ENCODE measurements at regions of chr19 and their contacts with region 1.

Region 1: GRCh38 chr19:10027158-10027693 is 13.9 kb downstream of the RDH8 start:
- DNase-seq: no peak
- H3K4me3 ChIP-seq: no peak overlapping the region
- H3K27me3 ChIP-seq: peaks cover 3% of the 10 kb centered on the region
- CTCF ChIP-seq: no peak

Region 2: DNA sequence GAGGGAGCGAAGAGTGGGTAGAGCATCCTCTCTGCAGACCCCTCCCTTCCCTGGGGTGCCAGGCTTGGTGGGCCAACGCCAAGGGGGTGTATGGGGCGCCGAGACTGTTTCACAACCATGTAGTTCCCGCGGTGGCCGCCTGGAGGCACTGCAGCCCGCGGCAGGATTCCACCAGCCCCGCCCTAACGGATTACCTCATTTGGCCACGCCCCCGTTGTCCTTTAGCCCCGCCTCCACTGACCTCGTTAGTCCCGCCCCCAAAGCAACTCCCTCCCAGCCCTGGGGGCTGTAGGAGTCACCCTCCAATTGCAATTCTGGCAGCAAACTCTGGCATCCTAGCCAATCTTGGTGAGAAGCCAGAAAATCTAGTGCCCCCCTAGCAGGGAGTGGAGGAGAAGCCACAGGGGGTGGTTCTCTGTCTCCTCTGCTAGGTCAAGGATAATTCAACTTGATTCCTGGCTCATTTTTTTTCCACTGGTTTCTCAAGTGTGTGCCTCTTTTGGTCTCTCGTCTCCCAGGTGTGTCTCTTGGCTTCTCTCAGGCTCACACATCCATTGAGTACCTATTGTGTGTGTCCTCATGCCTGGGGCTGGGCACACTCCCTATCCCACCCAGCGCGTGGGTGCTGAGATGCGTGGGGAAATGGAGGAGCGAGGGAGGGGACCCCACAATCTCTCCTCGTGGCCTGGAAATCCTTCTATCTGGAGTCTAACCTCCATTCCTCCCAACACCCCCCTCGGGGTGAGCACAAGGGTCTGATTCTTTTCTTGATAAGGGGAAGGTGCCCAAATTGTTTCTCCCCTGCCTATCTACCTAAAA is 92.9 kb before region 1 on chr19:
- CTCF ChIA-PET with region 1: interaction called, 126 read pairs
- POLR2A ChIA-PET with region 1: no interaction called
- DNase-seq: no peak
- H3K4me3 ChIP-seq: no peak overlapping the region
- H3K27me3 ChIP-seq: peaks cover 18% of the 10 kb centered on the region
- CTCF ChIP-seq: peak; percentile 98

Region 3: GRCh38 chr19:9945319-9945966 is 81.8 kb before region 1 on chr19:
- CTCF ChIA-PET with region 1: interaction called, 13 read pairs
- POLR2A ChIA-PET with region 1: no interaction called
- DNase-seq: peak; percentile 100
- H3K4me3 ChIP-seq: no peak overlapping the region
- H3K27me3 ChIP-seq: no peaks in the 10 kb centered on the region
- CTCF ChIP-seq: peak; percentile 28; the same call in 1 of the 2 replicates

Region 4: DNA sequence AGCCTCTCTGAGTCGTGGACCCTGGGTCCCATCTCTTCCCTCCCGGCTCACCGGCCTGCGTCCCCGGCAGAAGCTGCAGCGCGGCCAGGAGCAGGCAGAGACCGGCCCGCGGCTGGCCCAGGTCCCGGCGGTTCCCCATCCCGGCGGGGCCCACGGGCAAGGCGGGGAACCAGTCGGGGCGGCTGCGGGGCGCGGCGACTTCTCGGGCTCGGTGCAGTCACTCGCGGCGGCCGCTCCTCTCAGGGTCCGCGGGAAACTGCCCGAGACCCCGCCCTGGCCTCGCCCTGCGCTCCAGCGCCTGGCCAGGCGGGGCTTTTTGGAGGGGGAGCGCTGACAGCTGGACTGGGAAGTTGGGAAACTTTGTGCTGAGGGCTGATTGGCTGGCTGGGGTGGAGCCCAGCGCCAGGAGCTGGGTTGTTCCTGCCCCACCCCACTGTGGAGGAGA is 17.0 kb before region 1 on chr19 and contains the start of gene COL5A3:
- CTCF ChIA-PET with region 1: interaction called, 32 read pairs
- POLR2A ChIA-PET with region 1: no interaction called
- DNase-seq: no peak
- H3K4me3 ChIP-seq: peak within 1 kb of the TSS; percentile 43
- H3K27me3 ChIP-seq: peaks cover 10% of the 10 kb centered on the region; the same call in 1 of the 2 replicates
- CTCF ChIP-seq: no peak
- polyA plus RNA-seq, gene COL5A3: 15.0 and 24.9 TPM in 2 replicates

Region 5: DNA sequence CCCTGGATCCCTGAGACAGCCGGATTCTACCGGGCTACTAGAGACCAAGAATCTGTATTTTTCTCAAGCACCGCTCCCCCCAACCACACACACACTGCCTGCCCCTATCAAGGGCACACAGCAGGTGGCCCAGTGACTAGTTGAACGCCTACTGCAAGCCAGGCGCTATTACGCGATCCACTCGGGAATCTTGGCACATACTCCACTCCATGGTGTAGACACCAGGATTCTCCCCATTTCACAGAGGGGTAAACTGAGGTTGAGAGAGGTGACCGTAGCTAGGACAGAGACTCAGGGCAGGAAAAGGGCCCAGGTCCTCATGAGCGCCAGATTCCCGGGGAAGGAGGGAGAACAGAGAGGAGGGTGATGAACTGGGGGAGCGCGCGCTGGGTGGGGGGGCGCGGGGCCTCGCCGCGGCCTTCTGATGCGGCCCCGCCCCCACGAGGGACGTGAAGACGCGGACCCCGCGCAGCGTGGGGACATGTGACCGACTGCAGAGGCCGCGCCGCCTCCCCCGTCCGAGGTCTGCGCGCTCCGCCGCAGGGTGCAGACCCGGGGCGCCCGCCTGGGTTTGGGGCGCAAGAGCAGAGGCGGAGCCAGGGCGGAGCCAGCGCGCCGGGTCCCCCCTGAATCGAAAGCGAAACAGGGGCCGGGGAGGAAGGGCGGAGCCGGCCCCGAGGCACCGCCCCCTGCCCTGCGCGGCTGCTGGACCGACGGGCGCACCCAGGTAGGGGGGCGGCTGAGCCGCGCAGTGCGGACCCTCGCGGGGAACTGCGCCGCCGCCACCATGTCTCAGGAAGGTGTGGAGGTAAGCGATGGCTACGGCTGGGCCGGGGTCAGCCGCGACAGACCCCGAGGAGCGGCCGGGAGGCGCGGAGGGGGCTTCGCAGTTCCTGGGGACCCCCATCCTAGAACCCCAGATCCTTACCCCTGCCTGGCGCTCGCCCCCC is 58.7 kb after region 1 on chr19 and contains the start of gene SHFL:
- CTCF ChIA-PET with region 1: interaction called, 11 read pairs
- POLR2A ChIA-PET with region 1: no interaction called
- DNase-seq: no peak
- H3K4me3 ChIP-seq: peak within 1 kb of the TSS; percentile 99
- H3K27me3 ChIP-seq: no peaks in the 10 kb centered on the region
- CTCF ChIP-seq: no peak
- polyA plus RNA-seq, gene SHFL: 30.1 and 42.2 TPM in 2 replicates

Region 6: GRCh38 chr19:10142701-10143375 is 115.6 kb after region 1 on chr19:
- CTCF ChIA-PET with region 1: no interaction called
- POLR2A ChIA-PET with region 1: no interaction called
- DNase-seq: no peak
- H3K4me3 ChIP-seq: no peak overlapping the region
- H3K27me3 ChIP-seq: no peaks in the 10 kb centered on the region
- CTCF ChIP-seq: no peak

Measured in BJ (cell line).